ENCODE measurements at regions of chr9 and their contacts with region 1.

Region 1: GRCh38 chr9:69672596-69673310 is 582 bp upstream of the APBA1 start:
- DNase-seq: peak; percentile 74 to 97 (median 85)

Region 2: GRCh38 chr9:69149321-69149807 is 523.4 kb before region 1 on chr9:
- intact Hi-C with region 1: no loop called
- DNase-seq: no peak

Region 3: DNA sequence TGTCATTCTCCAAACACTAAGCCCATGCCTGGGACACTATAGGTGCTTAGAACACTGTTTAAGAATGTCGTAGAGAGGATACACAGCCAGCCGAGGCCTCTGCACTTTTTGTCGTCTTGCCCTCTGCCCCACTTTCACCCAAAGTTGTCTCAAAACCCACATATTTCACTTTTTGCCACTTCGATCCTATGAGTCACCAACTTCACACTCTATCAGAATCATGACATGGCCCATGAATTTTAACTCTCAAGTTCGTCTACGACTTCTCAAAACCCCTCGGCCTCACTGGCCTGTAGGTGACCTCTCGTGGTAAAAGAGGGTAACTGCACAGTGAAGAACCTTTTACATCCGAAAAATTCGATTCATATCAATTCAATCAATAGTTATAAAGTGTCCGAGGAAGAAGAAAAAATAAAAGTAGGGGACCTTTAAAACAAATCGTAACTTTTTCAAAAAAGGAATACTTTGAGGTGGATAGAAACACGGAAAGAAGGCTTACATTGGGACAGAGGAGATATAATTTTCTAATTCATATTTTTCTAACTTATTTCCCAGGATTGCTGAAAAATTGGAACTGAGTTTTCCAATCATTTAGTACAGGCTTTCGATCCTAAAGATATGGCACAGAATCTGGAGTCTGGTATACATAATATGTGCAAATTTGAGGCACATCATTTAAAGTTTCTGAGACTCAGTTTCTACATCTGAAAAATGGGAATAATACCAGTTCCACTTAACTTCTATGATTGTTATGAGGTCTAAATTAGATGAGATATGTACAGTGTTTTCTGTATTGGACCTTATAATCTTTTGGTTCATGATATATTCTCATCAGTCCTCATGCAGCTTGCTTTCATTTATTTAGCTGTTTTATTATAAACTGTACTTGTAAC is 123.2 kb before region 1 on chr9:
- intact Hi-C with region 1: loop called (anchors 5 kb)
- DNase-seq: peak in 2 of 10 donors; percentile 43 to 83

Region 4: GRCh38 chr9:69759421-69760277 is 86.9 kb after region 1 on chr9 and contains the start of gene PTAR1:
- intact Hi-C with region 1: loop called (anchors 1 kb)
- DNase-seq: peak; percentile 81 to 98 (median 85)

Region 5: DNA sequence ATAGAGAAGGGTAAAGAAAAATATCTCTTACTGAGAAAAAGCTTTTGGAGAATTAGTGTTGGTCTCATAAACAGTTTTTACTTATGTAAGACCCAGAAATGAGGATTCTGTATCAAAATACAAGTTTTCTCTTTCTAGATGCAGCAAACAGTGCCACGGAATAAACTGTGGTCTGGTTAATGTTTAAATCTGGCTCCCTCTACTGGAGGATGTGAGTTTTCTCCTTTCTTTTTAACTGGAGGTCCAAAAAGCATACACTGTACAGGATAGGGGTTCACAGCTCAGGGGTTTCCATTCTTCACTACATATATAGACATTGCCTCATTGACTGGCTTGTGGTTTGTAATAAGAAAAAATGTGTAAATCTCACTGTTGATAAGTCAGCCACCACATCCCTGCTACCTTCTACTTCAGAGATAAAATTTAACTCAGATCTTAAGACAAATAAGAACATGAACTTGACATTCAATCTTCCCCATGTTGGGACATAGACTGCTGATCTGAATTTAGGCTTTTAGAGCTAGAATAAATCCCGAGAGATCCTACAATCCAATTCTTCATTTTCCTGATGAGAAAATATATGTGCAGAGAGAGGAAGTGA is 246.8 kb after region 1 on chr9:
- intact Hi-C with region 1: loop called (anchors 10 kb)
- DNase-seq: no peak

Measured in posterior cingulate gyrus (tissue), 11 donors.